K562 (cell line): ENCODE measurements at regions of chr22 and their contacts with region 1.

Region 1: GRCh38 chr22:42437488-42438292 is 5.5 kb upstream of the NFAM1 start:
- DNase-seq: peak; percentile 74 to 79 (median 76)
- ATAC-seq: peak; percentile 95
- H3K4me3 ChIP-seq: peak overlapping the region; percentile 29; the same call in 1 of the 2 replicates
- H3K27ac ChIP-seq: no peak overlapping the region
- H3K4me1 ChIP-seq: peaks cover 3 to 29% of the 10 kb centered on the region in 2 experiments; a peak in 4 of 5 replicates
- H3K27me3 ChIP-seq: peaks cover 0 to 21% of the 10 kb centered on the region in 2 experiments; a peak in 2 of 5 replicates
- CTCF ChIP-seq: peak; percentile 90 to 96 (median 92)
- EP300 ChIP-seq: no peak
- POLR2A ChIP-seq: no peak
- RAD21 ChIP-seq: peak; percentile 93

Region 2: DNA sequence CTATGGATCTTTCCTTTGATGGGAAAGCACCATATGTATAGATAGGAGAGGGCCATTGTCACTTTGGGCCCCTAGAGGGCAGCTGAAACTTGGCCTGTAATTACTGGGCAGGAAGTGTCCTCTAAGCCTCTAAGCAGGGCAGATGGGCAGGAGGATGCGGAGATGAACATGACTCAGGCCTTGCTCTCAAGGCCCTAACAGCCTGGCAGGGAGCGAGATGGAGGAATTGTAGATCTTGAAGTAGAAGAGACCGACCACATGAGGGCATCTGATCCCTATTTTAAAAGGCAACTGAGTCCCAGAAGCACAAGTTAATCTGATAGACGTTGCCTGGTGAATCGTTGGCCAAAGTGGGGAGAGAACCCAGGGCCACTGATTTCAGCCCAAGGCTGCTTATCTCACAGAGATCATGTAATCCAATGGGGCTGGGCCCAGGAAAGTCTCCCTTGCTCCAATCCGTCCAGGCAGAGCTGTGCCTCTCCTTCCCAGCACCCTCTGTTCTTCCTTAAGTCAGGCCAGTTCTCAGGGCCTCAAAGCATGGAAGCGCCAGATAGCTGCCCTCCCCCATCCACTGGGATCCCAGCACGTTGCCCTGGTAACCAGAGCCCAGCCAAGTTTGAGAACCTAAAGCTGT is 471.0 kb before region 1 on chr22:
- CTCF ChIA-PET with region 1: no interaction called
- POLR2A ChIA-PET with region 1: no interaction called
- in situ Hi-C with region 1: loop called (anchors 25 kb)
- intact Hi-C with region 1: no loop called
- DNase-seq: peak; percentile 21 to 51 (median 31)
- ATAC-seq: peak; percentile 68
- H3K4me3 ChIP-seq: no peak overlapping the region
- H3K27ac ChIP-seq: no peak overlapping the region
- H3K4me1 ChIP-seq: peaks cover 4 to 11% of the 10 kb centered on the region in 2 experiments; a peak in 4 of 5 replicates
- H3K27me3 ChIP-seq: peaks cover 0 to 11% of the 10 kb centered on the region in 2 experiments; a peak in 1 of 5 replicates
- CTCF ChIP-seq: peak; percentile 35 to 44 (median 39); a peak in 5 of 6 replicates
- EP300 ChIP-seq: no peak
- POLR2A ChIP-seq: no peak
- RAD21 ChIP-seq: peak in 1 of 2 experiments; percentile 49; a peak in 2 of 4 replicates

Region 3: GRCh38 chr22:42169055-42169469 is 268.6 kb before region 1 on chr22:
- CTCF ChIA-PET with region 1: interaction called, 48 read pairs
- POLR2A ChIA-PET with region 1: no interaction called
- in situ Hi-C with region 1: loop called (anchors 5 kb)
- intact Hi-C with region 1: loop called (anchors 1 kb)
- DNase-seq: peak; percentile 80 to 82 (median 80)
- ATAC-seq: peak; percentile 97
- H3K4me3 ChIP-seq: no peak overlapping the region
- H3K27ac ChIP-seq: no peak overlapping the region
- H3K4me1 ChIP-seq: peaks cover 0 to 4% of the 10 kb centered on the region in 2 experiments; a peak in 3 of 5 replicates
- H3K27me3 ChIP-seq: no peaks in the 10 kb centered on the region
- CTCF ChIP-seq: peak; percentile 96 to 100 (median 100)
- EP300 ChIP-seq: no peak
- POLR2A ChIP-seq: no peak
- RAD21 ChIP-seq: peak; percentile 96 to 98

Region 4: DNA sequence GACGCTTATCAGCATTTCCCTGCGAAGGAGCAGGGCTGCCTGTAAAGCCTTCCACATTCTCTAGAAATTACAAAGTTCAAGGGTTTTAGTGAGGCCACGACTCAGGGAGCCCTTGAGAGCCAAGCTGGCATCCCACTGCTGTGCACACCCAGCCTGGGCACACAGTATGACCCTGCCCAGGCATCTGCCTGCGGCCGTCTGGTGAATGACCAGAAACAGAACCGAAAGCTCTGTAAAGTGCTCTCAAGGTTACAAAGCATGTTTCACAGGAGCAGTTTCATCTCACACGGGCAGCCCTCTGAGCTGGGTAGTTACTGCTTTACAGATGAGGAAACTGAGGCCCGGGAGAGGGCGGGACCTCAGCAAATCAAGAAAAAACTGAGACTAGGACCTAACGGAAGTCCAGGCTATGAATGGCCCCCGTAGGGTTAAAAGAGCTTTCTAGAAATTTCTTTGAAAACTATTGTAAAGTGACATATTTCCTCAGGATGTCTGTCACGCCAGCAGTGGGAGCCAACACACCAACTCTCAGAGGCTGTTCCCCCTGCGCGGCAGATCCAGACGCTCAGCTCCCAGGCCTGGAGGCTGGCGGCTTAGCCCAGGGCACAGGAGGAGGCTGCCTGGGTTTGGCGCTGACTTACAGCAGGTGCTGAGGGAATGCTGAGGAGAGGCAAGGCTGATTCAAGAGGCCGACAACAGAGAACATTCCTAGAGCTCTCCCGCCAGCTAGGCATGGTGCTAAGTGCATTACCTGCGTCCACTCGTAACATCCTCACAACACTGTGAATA is 159.5 kb before region 1 on chr22:
- CTCF ChIA-PET with region 1: interaction called, 4 read pairs
- POLR2A ChIA-PET with region 1: no interaction called
- in situ Hi-C with region 1: no loop called
- intact Hi-C with region 1: loop called (anchors 1 kb)
- DNase-seq: no peak
- ATAC-seq: peak; percentile 55; the same call in 2 of the 3 replicates
- H3K4me3 ChIP-seq: no peak overlapping the region
- H3K27ac ChIP-seq: no peak overlapping the region
- H3K4me1 ChIP-seq: peaks cover 0 to 16% of the 10 kb centered on the region in 2 experiments; a peak in 2 of 5 replicates
- H3K27me3 ChIP-seq: no peaks in the 10 kb centered on the region; a peak in 1 of 5 replicates
- CTCF ChIP-seq: peak; percentile 29 to 40 (median 30); a peak in 4 of 6 replicates
- EP300 ChIP-seq: no peak
- POLR2A ChIP-seq: no peak
- RAD21 ChIP-seq: peak in 1 of 2 experiments; percentile 44; a peak in 2 of 4 replicates

Region 5: GRCh38 chr22:42294034-42294985 is 143.4 kb before region 1 on chr22:
- CTCF ChIA-PET with region 1: no interaction called
- POLR2A ChIA-PET with region 1: no interaction called
- in situ Hi-C with region 1: no loop called
- intact Hi-C with region 1: no loop called
- DNase-seq: peak; percentile 50 to 69 (median 61)
- ATAC-seq: peak; percentile 89
- H3K4me3 ChIP-seq: no peak overlapping the region
- H3K27ac ChIP-seq: no peak overlapping the region
- H3K4me1 ChIP-seq: peaks cover 1 to 35% of the 10 kb centered on the region in 2 experiments; a peak in 3 of 5 replicates
- H3K27me3 ChIP-seq: no peaks in the 10 kb centered on the region
- CTCF ChIP-seq: no peak
- EP300 ChIP-seq: no peak
- POLR2A ChIP-seq: no peak
- RAD21 ChIP-seq: no peak

Region 6: GRCh38 chr22:42369245-42370041 is 68.2 kb before region 1 on chr22:
- CTCF ChIA-PET with region 1: no interaction called
- POLR2A ChIA-PET with region 1: no interaction called
- in situ Hi-C with region 1: no loop called
- intact Hi-C with region 1: loop called (anchors 10 kb)
- DNase-seq: peak; percentile 93 to 97 (median 97)
- ATAC-seq: peak; percentile 100
- H3K4me3 ChIP-seq: peak overlapping the region; percentile 47
- H3K27ac ChIP-seq: peak overlapping the region; percentile 52; the same call in 2 of the 3 replicates
- H3K4me1 ChIP-seq: peaks cover 4 to 10% of the 10 kb centered on the region in 2 experiments; a peak in 3 of 5 replicates
- H3K27me3 ChIP-seq: peaks cover 16 to 44% of the 10 kb centered on the region in 2 experiments; a peak in 4 of 5 replicates
- CTCF ChIP-seq: no peak
- EP300 ChIP-seq: no peak
- POLR2A ChIP-seq: peak; percentile 65
- RAD21 ChIP-seq: no peak

Region 7: GRCh38 chr22:42399315-42400271 is 38.1 kb before region 1 on chr22:
- CTCF ChIA-PET with region 1: interaction called, 7 read pairs
- POLR2A ChIA-PET with region 1: no interaction called
- in situ Hi-C with region 1: no loop called
- intact Hi-C with region 1: loop called (anchors 5 kb)
- DNase-seq: peak; percentile 42 to 78 (median 54)
- ATAC-seq: peak; percentile 89
- H3K4me3 ChIP-seq: no peak overlapping the region
- H3K27ac ChIP-seq: no peak overlapping the region
- H3K4me1 ChIP-seq: peaks cover 7 to 20% of the 10 kb centered on the region in 2 experiments; a peak in 4 of 5 replicates
- H3K27me3 ChIP-seq: peaks cover 3 to 25% of the 10 kb centered on the region in 2 experiments; a peak in 3 of 5 replicates
- CTCF ChIP-seq: peak in 1 of 3 experiments; percentile 22; a peak in 1 of 6 replicates
- EP300 ChIP-seq: no peak
- POLR2A ChIP-seq: no peak
- RAD21 ChIP-seq: peak in 1 of 2 experiments; percentile 29; a peak in 1 of 4 replicates

Region 8: GRCh38 chr22:42520663-42521546 is 83.2 kb after region 1 on chr22:
- CTCF ChIA-PET with region 1: no interaction called
- POLR2A ChIA-PET with region 1: no interaction called
- in situ Hi-C with region 1: no loop called
- intact Hi-C with region 1: no loop called
- DNase-seq: no peak
- ATAC-seq: no peak
- H3K4me3 ChIP-seq: no peak overlapping the region
- H3K27ac ChIP-seq: no peak overlapping the region
- H3K4me1 ChIP-seq: peaks cover 4 to 17% of the 10 kb centered on the region in 2 experiments; a peak in 3 of 5 replicates
- H3K27me3 ChIP-seq: no peaks in the 10 kb centered on the region
- CTCF ChIP-seq: no peak
- EP300 ChIP-seq: no peak
- POLR2A ChIP-seq: no peak
- RAD21 ChIP-seq: no peak